Heart right ventricle (tissue), 16 donors: ENCODE measurements at regions of chr18 and their contacts with region 1.

Region 1: DNA sequence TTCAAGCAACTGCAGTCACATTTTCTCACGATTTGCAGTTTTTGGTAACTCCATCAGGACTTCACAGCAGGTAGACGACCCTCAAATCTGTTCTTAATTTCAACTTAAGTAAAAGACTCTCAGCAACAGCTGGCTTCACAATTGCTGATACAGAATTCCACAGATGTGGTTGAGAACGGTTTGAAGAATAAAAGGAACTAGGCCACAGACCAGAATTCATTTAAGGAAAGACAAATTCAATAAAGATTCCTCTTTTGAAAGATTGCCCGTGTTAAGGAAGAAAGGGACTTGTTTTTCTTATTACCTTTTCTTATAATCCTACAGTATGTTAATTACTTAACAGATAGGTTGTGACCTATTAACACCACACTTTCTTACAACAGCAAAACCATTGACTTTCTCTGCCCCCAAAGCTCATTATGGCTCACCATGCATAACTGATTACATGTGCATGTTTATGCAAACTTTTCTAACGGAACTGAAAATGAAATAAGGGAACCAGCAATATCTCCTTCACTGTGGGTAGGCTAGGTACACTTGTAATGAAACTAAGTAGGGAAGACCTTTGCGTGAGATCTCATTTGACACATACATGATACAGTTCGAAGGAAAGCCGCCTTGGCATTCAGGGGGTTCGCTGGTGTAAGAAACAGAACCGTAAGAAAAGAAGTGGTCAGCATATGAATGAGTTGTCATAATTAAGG is 4.7 kb upstream of the ZNF516 start:
- DNase-seq: no peak
- ATAC-seq: no peak
- H3K4me3 ChIP-seq: no peak overlapping the region
- H3K27ac ChIP-seq: peak overlapping the region in 1 of 10 donors; percentile 66
- H3K4me1 ChIP-seq: peaks cover 0 to 46% (median 4%) of the 10 kb centered on the region in 9 donors
- H3K27me3 ChIP-seq: no peaks in the 10 kb centered on the region
- CTCF ChIP-seq: no peak

Region 2: DNA sequence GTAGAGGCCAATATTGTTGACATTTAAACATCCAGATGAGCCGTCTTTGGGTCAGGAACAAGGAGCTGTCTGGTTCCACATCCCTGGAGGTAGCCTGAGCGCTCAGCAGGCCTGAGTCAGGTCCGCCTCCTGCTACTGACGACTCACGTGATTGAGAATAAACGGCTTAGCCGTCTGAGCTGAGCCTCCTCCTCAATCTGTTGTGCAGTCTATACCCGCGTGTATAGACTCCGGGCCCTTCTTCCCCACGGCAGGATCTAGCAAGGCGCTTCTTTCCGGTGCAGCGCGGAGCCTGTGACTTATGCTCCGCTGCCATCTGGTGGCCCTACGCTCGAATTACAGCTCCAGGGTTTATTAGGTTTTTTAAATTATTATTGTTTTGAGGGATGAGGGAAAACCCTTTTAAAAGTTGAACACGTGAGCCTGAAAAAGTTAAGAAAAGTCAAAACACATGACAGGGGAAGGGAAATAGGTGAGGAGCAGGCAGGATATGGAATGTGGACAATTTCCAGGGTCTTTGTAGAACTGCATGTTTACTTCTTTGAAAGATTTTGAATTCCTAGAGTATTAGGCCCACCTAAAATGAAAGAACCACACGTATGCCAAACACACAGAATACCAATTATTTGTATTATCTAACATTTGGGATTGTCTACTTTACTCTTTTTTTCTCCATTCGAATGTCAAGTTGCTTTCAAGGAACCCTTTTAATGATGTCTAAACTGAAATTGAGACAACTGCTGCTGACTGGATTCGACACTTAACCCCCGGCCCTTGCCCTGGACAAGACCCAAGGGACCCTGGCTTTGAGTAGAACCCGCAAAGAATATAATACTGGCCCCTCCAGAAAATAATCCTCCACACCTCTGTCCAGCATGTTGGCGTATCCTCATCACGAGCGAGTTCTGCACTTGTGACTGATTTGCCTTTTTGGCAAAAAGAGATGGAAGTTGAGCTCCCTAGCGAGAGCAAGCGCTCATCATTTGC is 210.2 kb after region 1 on chr18:
- intact Hi-C with region 1: loop called in 1 of 10 experiments (anchors 5 kb)
- DNase-seq: peak; percentile 46 to 56
- ATAC-seq: peak; percentile 73 to 85 (median 81)
- H3K4me3 ChIP-seq: peak overlapping the region in 1 of 10 donors; percentile 23
- H3K27ac ChIP-seq: no peak overlapping the region
- H3K4me1 ChIP-seq: peaks cover 0 to 7% (median 0%) of the 10 kb centered on the region in 9 donors
- H3K27me3 ChIP-seq: no peaks in the 10 kb centered on the region
- CTCF ChIP-seq: peak; percentile 89 to 95 (median 91)